CD4-positive, alpha-beta memory T cell (primary cell): ENCODE measurements at regions of chr9 and their contacts with region 1.

Region 1: GRCh38 chr9:80369641-80370040 is 797.9 kb downstream of the TLE4 start:
- DNase-seq: no peak
- H3K4me3 ChIP-seq: no peak overlapping the region
- H3K4me3 Mint-ChIP-seq: no peak overlapping the region
- H3K27ac ChIP-seq: no peak overlapping the region
- H3K27ac Mint-ChIP-seq: no peak overlapping the region
- H3K4me1 ChIP-seq: no peaks in the 10 kb centered on the region
- H3K4me1 Mint-ChIP-seq: no peaks in the 10 kb centered on the region
- H3K27me3 ChIP-seq: no peaks in the 10 kb centered on the region
- H3K27me3 Mint-ChIP-seq: no peaks in the 10 kb centered on the region

Region 2: GRCh38 chr9:80320916-80321315 is 48.7 kb before region 1 on chr9:
- CTCF ChIA-PET with region 1: no interaction called
- POLR2A ChIA-PET with region 1: no interaction called
- intact Hi-C with region 1: loop called (anchors 10 kb)
- DNase-seq: no peak
- H3K4me3 ChIP-seq: no peak overlapping the region
- H3K4me3 Mint-ChIP-seq: no peak overlapping the region
- H3K27ac ChIP-seq: no peak overlapping the region
- H3K27ac Mint-ChIP-seq: no peak overlapping the region
- H3K4me1 ChIP-seq: no peaks in the 10 kb centered on the region
- H3K4me1 Mint-ChIP-seq: no peaks in the 10 kb centered on the region
- H3K27me3 ChIP-seq: no peaks in the 10 kb centered on the region
- H3K27me3 Mint-ChIP-seq: no peaks in the 10 kb centered on the region

Region 3: DNA sequence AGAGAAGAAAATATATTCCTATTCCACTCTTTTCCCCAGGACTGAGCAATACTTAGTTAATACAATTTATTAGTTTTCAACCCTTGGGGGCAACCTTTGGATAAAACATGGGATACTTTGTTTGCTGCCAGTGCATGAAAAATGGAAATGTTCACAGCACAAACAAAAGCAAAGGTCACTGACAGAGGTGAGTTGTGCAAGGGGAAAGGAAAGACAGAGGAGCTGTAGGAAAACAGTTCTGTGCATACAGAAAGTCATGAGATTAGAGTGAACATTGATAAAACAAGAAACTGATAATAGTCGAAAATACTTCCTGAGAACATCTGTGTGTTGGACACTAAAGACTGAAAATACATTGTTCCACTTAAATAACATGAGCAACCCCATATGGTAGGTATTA is 18.0 kb before region 1 on chr9:
- CTCF ChIA-PET with region 1: no interaction called
- POLR2A ChIA-PET with region 1: no interaction called
- intact Hi-C with region 1: no loop called
- DNase-seq: no peak
- H3K4me3 ChIP-seq: no peak overlapping the region
- H3K4me3 Mint-ChIP-seq: no peak overlapping the region
- H3K27ac ChIP-seq: no peak overlapping the region
- H3K27ac Mint-ChIP-seq: no peak overlapping the region
- H3K4me1 ChIP-seq: no peaks in the 10 kb centered on the region
- H3K4me1 Mint-ChIP-seq: no peaks in the 10 kb centered on the region
- H3K27me3 ChIP-seq: no peaks in the 10 kb centered on the region
- H3K27me3 Mint-ChIP-seq: no peaks in the 10 kb centered on the region